MCF 10A (cell line): ENCODE measurements at regions of chr1 and their contacts with region 1.

Region 1: DNA sequence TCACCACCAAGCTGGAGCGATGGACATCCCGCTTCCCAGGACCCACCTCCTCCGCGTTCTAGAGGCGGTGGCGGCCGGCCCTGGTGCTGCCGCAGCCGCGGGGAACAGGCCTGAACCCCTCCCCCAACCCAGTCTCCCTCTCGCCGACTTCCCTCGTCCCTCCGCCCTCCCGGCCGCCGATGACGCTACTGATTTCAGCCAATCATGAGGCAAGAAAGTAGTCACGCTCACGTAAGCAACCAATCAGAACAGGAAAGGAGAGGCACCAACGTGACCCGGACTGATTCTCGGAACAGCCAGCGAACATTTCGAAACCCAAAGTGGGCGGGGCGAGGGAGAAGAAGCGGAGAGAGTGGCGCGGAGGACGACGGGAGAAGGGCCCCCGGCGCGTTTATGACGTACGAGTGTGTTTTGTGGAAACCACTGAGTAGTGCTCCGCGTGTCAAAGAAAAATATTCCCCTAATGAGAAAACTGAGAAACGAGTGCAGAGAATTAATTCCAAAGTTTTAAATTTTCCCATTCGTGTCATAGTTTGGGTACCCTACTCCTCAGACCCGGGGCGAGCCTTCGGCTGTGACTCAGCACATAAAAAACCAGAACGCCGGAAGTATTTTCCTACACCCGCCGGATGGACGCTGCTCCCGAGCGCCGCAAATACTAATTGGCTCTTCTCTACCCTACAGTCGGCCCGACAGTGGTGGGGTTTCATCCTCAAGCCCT is at the start of gene NRDC:
- DNase-seq: peak; percentile 100
- H3K4me3 Mint-ChIP-seq: no peak within 1 kb of the TSS
- H3K27ac Mint-ChIP-seq: no peak within 1 kb of the TSS
- H3K4me1 Mint-ChIP-seq: peaks cover 9% of the 10 kb centered on the region
- H3K27me3 Mint-ChIP-seq: peaks cover 15% of the 10 kb centered on the region
- CTCF ChIP-seq: no peak
- total RNA-seq, gene NRDC: 168 and 176 TPM in 2 replicates

Region 2: GRCh38 chr1:51842261-51842660 is 36.5 kb before region 1 on chr1:
- CTCF ChIA-PET with region 1: interaction called, 6 read pairs
- POLR2A ChIA-PET with region 1: interaction called, 17 read pairs
- intact Hi-C with region 1: no loop called
- DNase-seq: no peak
- H3K4me3 Mint-ChIP-seq: no peak overlapping the region
- H3K27ac Mint-ChIP-seq: no peak overlapping the region
- H3K4me1 Mint-ChIP-seq: peaks cover 22% of the 10 kb centered on the region
- H3K27me3 Mint-ChIP-seq: no peaks in the 10 kb centered on the region
- CTCF ChIP-seq: no peak

Region 3: GRCh38 chr1:51863384-51863783 is 15.4 kb before region 1 on chr1:
- CTCF ChIA-PET with region 1: interaction called, 3 read pairs
- POLR2A ChIA-PET with region 1: interaction called, 15 read pairs
- intact Hi-C with region 1: no loop called
- DNase-seq: no peak
- H3K4me3 Mint-ChIP-seq: no peak overlapping the region
- H3K27ac Mint-ChIP-seq: no peak overlapping the region
- H3K4me1 Mint-ChIP-seq: peaks cover 17% of the 10 kb centered on the region
- H3K27me3 Mint-ChIP-seq: no peaks in the 10 kb centered on the region
- CTCF ChIP-seq: no peak

Region 4: GRCh38 chr1:53196485-53197270 is 1317.9 kb after region 1 on chr1 and contains the start of gene CPT2:
- CTCF ChIA-PET with region 1: no interaction called
- POLR2A ChIA-PET with region 1: no interaction called
- intact Hi-C with region 1: no loop called
- DNase-seq: peak; percentile 91
- H3K4me3 Mint-ChIP-seq: peak within 1 kb of the TSS; percentile 94
- H3K27ac Mint-ChIP-seq: peak within 1 kb of the TSS; percentile 98
- H3K4me1 Mint-ChIP-seq: peaks cover 24% of the 10 kb centered on the region
- H3K27me3 Mint-ChIP-seq: no peaks in the 10 kb centered on the region
- CTCF ChIP-seq: no peak
- total RNA-seq, gene CPT2: 17.3 and 19.6 TPM in 2 replicates